BJ (cell line): ENCODE measurements at regions of chr3 and their contacts with region 1.

Region 1: DNA sequence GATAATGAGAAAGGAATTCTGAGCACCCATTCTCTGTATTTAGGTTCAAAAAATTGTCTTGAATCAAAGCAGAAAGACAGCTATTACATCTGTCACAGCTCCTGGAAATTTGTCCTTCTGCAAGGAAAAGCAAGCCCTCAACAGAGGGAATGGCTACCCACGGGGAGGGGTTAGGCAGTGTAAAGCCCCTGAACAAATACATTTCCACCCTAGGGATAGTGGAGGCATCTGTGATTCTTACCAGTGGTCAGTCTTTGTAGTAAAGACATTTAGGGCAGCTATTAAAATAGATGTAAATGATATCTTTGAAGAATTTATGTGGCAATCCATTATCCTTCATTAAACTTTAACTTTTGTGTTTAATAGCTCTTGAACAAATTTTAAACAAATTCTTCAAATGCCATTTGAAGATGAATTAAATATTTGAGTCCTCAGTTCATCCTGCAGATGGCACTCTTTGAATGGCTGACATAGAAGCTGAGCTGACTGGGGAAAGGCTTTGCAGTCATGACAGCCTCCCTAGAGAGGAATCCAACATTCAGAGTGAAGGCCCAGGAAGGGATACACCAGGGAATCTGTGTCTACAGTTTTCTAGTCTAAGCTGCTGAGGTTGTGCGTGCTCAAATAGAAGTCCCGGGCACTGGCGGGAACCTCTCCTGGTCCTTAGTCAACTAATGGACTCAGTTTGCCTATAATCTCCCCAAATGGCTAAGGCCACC is 359.7 kb upstream of the ROPN1 start:
- DNase-seq: peak; percentile 62
- H3K4me3 ChIP-seq: no peak overlapping the region
- H3K27me3 ChIP-seq: no peaks in the 10 kb centered on the region; the same call in 1 of the 2 replicates
- CTCF ChIP-seq: peak; percentile 57

Region 2: GRCh38 chr3:124014366-124014942 is 337.1 kb before region 1 on chr3:
- CTCF ChIA-PET with region 1: interaction called, 10 read pairs
- POLR2A ChIA-PET with region 1: no interaction called
- DNase-seq: no peak
- H3K4me3 ChIP-seq: no peak overlapping the region
- H3K27me3 ChIP-seq: no peaks in the 10 kb centered on the region; the same call in 1 of the 2 replicates
- CTCF ChIP-seq: no peak

Region 3: GRCh38 chr3:124429129-124429815 is 77.7 kb after region 1 on chr3:
- CTCF ChIA-PET with region 1: interaction called, 13 read pairs
- POLR2A ChIA-PET with region 1: interaction called, 3 read pairs
- DNase-seq: peak; percentile 55
- H3K4me3 ChIP-seq: no peak overlapping the region
- H3K27me3 ChIP-seq: peaks cover 3% of the 10 kb centered on the region; the same call in 1 of the 2 replicates
- CTCF ChIP-seq: no peak

Region 4: DNA sequence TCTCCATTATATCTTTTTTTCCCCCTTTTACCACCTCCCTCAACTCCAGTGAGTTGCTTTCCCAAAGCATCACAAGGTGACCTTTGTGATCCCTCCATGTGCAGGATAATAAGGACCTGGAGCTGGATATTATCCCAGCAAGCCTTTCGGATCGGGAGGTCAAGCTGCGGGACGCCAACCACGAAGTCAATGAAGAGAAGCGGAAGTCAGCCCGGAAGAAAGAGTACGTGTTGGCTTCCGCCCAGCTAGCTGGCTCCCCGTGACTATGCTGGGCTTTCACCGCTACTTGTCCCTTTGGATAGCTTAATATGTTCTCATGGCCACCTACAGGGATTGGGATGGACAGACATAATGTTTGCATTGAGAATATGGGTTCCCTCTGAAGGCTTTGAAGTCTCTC is 104.9 kb after region 1 on chr3:
- CTCF ChIA-PET with region 1: interaction called, 10 read pairs
- POLR2A ChIA-PET with region 1: no interaction called
- DNase-seq: no peak
- H3K4me3 ChIP-seq: no peak overlapping the region
- H3K27me3 ChIP-seq: no peaks in the 10 kb centered on the region; the same call in 1 of the 2 replicates
- CTCF ChIP-seq: no peak